ENCODE measurements at regions of chr18 and their contacts with region 1.

Region 1: GRCh38 chr18:46250084-46250811 is 146.1 kb downstream of the HAUS1 start:
- DNase-seq: peak; percentile 92
- H3K4me3 Mint-ChIP-seq: peak overlapping the region; percentile 71
- H3K27ac Mint-ChIP-seq: peak overlapping the region; percentile 90
- H3K4me1 Mint-ChIP-seq: peaks cover 52% of the 10 kb centered on the region
- H3K27me3 Mint-ChIP-seq: peaks cover 2% of the 10 kb centered on the region

Region 2: DNA sequence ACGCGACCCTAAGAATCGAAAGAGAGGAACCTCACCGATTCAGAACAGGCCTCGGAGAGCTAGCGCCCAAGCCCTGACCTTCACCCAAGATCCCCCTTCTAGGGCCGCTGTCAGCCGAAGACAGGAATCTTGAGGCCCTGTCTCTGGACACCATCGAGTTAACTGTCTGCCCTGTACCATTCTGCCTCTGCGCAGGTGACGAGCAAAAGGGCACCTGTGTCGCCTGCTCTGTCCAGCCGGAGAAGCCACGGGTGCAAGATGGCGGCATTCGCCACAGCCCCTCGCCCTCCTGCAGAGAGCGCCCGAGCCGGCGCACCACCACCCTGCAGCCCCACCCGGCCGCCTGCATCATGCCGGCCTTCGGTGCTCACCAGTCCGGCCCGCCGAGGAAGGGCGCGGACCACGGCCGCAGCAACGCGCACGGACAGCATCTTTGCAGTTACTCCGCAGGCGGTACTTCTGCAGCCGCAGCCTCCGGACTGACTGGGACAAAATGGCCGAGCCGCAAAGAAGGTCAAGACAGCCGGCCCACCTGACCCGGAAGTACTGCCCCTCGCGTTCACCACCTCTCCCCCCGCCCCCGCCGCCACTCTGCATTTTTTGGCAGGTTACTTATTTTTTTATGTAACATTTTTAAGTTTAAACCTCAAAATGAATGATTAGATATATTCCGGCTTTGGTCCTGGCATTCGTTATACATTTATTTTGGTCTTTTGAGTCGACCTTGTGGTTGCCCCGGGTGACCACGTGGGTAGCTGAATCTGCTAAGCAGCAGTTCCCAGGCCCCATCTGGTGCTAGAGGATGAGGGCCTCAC is 152.2 kb before region 1 on chr18 and contains the start of gene ATP5F1A:
- intact Hi-C with region 1: loop called (anchors 5 kb)
- DNase-seq: peak; percentile 95
- H3K4me3 Mint-ChIP-seq: peak within 1 kb of the TSS; percentile 98
- H3K27ac Mint-ChIP-seq: peak within 1 kb of the TSS; percentile 99
- H3K4me1 Mint-ChIP-seq: peaks cover 19% of the 10 kb centered on the region
- H3K27me3 Mint-ChIP-seq: no peaks in the 10 kb centered on the region
- total RNA-seq, gene ATP5F1A: 440 and 443 TPM in 2 replicates

Region 3: DNA sequence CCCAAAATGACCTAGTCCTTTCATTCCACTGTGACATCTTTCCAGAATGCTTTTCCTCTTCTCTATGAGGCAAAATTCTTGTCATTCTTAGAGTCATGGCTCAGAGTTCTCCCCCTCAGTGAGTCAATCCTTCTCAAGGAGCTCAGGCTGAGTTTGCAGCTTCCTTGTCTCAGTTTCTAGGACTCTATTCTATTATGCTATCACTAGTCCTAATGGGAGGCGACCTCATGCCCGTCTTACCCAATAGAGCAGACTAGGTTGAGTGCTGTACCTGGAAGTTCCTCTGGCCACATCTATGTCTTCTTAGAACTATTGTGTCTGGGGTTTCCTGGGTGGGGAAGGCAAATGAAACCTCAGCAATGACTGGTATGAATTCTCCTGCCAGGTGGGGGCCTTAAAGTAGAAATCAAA is 94.6 kb before region 1 on chr18:
- intact Hi-C with region 1: loop called (anchors 1 kb)
- DNase-seq: peak; percentile 90
- H3K4me3 Mint-ChIP-seq: peak overlapping the region; percentile 64
- H3K27ac Mint-ChIP-seq: peak overlapping the region; percentile 87
- H3K4me1 Mint-ChIP-seq: peaks cover 65% of the 10 kb centered on the region
- H3K27me3 Mint-ChIP-seq: no peaks in the 10 kb centered on the region

Region 4: GRCh38 chr18:46239549-46239948 is 10.7 kb before region 1 on chr18:
- intact Hi-C with region 1: no loop called
- DNase-seq: no peak
- H3K4me3 Mint-ChIP-seq: no peak overlapping the region
- H3K27ac Mint-ChIP-seq: no peak overlapping the region
- H3K4me1 Mint-ChIP-seq: peaks cover 22% of the 10 kb centered on the region
- H3K27me3 Mint-ChIP-seq: no peaks in the 10 kb centered on the region

Region 5: DNA sequence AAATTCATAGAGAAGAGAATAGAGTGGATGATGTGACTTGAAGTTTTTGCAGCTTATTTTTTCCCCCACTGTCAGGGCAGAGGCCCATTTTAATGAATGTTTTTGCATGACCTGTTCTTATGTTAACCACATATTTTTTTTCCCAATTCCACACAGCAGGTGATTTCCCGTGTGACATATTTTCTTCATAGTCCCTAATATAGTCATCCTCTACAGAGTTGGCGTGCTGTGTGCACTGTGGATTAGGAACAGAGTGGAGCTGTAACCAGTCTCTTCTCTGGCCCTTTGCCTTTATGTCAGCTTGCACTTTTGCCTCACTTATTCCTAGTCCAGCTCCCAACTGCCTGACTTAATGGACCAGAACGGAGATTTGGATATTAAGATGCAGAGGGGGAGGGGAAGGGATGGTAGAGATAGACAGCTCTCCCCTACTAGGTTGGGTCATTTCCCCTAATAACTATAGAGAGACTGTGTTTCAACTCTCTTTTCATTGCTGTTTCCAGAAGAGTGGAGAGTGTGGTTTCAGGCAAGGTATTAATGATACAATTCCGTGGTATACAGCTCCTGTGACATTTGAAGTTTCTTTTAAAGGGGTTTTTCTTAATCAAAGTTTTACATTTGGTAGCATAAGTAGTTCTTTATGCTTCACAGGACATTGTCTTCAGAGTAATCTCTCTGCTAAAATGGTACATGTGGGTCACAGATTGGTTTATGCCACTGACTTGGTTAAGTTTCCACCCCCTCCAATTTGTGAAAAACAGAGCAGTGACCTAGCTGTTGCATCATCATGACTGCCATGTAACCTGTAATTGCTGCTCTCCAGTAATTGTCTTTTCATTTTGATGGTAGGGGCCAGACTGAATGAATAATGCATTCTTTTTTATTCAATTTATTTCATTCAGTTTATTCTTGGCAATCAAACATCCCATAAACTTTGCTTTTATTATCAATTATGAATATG is 15.2 kb after region 1 on chr18:
- intact Hi-C with region 1: loop called (anchors 1 kb)
- DNase-seq: no peak
- H3K4me3 Mint-ChIP-seq: no peak overlapping the region
- H3K27ac Mint-ChIP-seq: peak overlapping the region; percentile 57
- H3K4me1 Mint-ChIP-seq: peaks cover 52% of the 10 kb centered on the region
- H3K27me3 Mint-ChIP-seq: no peaks in the 10 kb centered on the region

Measured in activated CD4-positive, alpha-beta T cell treated with anti-CD3 and anti-CD28 coated beads, Interleukin-2, amount 10 ng/mL, durations not matched to agents 24 days and 14 days (primary cell).